GM12878 (cell line): ENCODE measurements at regions of chr17 and their contacts with region 1.

Region 1: DNA sequence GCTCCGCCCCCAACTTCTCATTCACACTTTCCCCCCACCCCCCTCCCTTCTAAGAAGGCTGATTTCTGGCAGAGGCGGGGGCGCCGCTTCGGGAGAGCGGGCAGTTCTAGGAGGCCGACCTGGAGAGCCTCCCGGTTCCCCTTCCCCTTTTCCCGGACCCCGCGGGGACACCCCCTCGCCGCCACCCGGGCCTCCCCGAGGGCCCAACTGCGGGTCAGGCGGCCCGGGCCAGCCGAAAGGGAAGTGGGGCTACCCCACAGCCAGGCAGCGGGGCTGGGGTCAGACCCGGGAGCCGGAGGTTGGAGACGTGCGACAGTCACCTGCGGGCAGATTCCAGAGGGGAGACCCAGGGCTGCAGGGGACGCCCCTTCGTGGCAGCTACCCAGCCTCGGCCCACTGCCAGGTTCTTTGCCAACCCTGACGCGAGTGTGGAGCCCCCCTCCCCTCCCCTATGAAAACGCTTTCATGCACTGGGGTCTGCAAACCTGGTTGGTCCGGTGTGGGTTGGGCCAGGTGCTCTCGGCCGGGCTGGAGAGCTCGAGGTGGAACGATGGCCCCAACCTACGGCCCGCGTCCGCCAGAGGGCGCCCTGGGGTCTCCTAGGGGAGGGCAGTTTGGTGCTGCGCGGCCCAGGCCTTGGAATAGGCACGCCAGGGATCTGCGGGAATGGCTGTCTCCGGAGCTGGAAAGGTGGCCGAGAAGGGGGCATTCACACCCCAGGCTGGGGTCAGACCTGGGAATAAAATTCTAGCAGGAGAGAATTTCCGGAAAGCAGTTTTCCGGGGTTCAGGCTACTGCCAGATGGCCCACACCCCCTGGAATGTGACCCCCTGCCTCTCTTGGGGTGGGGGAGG is 721 bp upstream of the SOCS3 start:
- DNase-seq: no peak
- ATAC-seq: peak; percentile 57
- H3K4me3 ChIP-seq: peak overlapping the region; percentile 80
- H3K27ac ChIP-seq: peak overlapping the region; percentile 31
- H3K4me1 ChIP-seq: peaks cover 32% of the 10 kb centered on the region
- H3K27me3 ChIP-seq: 0 out of 4 replicates have a peak, but pooled peaks cover 0 to 5% of the 10 kb centered on the region in 2 experiments
- CTCF ChIP-seq: peak; percentile 91 to 93 (median 91)
- EP300 ChIP-seq: no peak
- POLR2A ChIP-seq: no peak
- RAD21 ChIP-seq: peak; percentile 89

Region 2: GRCh38 chr17:78289802-78290363 is 70.7 kb before region 1 on chr17:
- CTCF ChIA-PET with region 1: interaction called, 11 read pairs
- POLR2A ChIA-PET with region 1: interaction called, 6 read pairs
- RAD21 ChIA-PET with region 1: interaction called, 12 read pairs
- SMC1A ChIA-PET with region 1: interaction called, 13 read pairs
- in situ Hi-C with region 1: no loop called
- intact Hi-C with region 1: loop called (anchors 2 kb)
- DNase-seq: peak; percentile 30
- ATAC-seq: peak; percentile 100
- H3K4me3 ChIP-seq: no peak overlapping the region
- H3K27ac ChIP-seq: no peak overlapping the region
- H3K4me1 ChIP-seq: peaks cover 8% of the 10 kb centered on the region
- H3K27me3 ChIP-seq: no peaks in the 10 kb centered on the region
- CTCF ChIP-seq: peak; percentile 88 to 92 (median 89)
- EP300 ChIP-seq: no peak
- POLR2A ChIP-seq: no peak
- RAD21 ChIP-seq: peak; percentile 91

Region 3: DNA sequence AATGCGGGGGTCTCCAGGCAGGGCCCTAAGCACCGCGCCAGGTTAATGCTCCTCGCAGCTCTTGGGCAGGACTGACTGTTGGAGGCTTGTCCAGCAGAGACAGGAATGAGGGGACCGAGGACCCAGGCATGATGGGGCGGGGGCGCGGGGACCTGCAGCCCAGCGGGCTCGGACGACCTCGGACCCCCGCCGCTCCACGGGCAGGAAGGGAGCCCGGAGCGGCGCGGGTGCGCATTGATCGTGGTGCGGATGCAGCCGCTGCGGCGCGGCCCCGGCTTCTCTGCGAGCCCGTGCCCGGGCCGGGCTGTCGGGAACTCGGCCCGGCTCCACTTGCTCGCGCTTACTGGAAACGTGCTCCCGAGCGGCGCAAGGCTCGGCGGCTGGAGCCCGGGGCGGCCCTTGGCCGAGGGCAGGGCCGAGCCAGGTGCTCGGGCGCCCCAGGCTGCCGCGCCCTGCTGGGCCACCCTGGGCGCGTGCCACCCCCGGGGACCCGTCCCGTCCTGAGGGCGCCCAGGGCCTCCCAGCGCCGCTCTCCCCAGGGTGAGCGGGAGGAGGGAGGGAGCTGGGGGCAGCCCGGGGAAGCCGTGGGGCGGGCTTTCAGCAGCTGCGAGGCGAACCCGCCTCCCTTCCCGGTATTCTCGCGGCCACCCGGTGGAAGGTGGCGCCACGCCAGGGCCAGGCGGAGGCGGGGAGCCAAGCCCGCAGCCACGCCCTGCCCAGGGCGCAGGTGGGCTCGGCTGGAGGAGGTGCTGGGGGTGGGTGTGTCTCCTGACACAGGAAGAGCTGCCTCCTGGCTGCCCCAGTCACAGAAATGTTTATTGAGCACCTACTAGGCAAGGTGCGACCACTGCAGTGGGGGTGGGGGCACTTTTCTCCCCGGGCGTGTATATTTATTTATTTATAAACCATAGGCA is 46.6 kb before region 1 on chr17:
- CTCF ChIA-PET with region 1: interaction called, 18 read pairs
- POLR2A ChIA-PET with region 1: interaction called, 8 read pairs
- RAD21 ChIA-PET with region 1: interaction called, 12 read pairs
- SMC1A ChIA-PET with region 1: interaction called, 6 read pairs
- in situ Hi-C with region 1: no loop called
- intact Hi-C with region 1: loop called (anchors 2 kb)
- DNase-seq: peak; percentile 45
- ATAC-seq: peak; percentile 69
- H3K4me3 ChIP-seq: peak overlapping the region; percentile 41; the same call in 1 of the 2 replicates
- H3K27ac ChIP-seq: no peak overlapping the region
- H3K4me1 ChIP-seq: peaks cover 42% of the 10 kb centered on the region
- H3K27me3 ChIP-seq: no peaks in the 10 kb centered on the region; a peak in 1 of 4 replicates
- CTCF ChIP-seq: no peak; a peak in 1 of 6 replicates
- EP300 ChIP-seq: no peak
- POLR2A ChIP-seq: no peak
- RAD21 ChIP-seq: no peak

Region 4: DNA sequence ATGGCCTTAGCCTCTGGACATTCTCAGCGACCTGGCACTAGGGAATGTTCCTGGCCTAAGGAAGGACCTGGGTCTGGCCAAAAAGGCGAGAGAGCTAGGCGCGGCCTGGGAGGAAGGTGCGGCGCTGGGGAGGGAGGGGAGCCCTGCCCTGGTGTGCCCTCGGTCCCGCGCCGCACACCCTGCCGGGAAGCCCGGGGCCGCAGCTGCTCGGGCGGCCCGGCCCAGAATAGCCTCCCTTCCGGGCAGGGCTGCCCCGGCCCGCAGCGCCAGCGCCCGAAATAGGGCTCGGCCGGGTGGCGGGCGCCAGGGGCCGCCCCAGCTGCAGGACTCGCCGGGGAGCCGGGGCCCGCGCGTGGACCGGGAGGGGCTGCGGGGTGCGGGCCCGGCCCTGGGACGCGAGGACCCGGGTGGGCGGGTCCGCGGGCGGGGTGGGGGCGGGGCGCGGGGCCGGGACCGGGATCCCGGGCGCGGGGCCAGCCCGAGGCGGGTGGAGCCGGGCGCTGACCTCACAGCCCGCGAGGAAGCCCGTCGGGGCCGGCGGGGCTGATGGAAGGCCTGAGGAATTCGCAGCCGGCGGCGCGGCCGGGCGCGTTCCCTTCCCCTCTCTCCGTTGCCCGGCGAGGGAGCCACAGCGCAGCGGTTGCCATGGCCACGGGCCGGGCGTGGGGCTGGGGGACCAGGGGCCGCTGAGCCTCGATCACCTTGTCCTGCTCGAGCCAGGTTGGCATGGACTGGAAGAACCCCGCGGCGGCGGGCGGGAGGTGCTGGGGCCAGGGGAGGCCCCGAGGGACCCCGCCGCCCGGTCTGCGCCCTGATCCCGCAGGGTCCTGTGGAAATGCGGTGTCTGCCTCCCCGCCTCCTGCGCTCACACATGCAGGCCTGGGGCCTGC is 18.8 kb before region 1 on chr17:
- CTCF ChIA-PET with region 1: interaction called, 14 read pairs
- POLR2A ChIA-PET with region 1: interaction called, 15 read pairs
- RAD21 ChIA-PET with region 1: interaction called, 9 read pairs
- SMC1A ChIA-PET with region 1: interaction called, 11 read pairs
- in situ Hi-C with region 1: no loop called
- intact Hi-C with region 1: loop called (anchors 2 kb)
- DNase-seq: no peak
- ATAC-seq: peak; percentile 2
- H3K4me3 ChIP-seq: no peak overlapping the region; the same call in 1 of the 2 replicates
- H3K27ac ChIP-seq: no peak overlapping the region
- H3K4me1 ChIP-seq: peaks cover 60% of the 10 kb centered on the region
- H3K27me3 ChIP-seq: no peaks in the 10 kb centered on the region
- CTCF ChIP-seq: no peak
- EP300 ChIP-seq: no peak
- POLR2A ChIP-seq: no peak
- RAD21 ChIP-seq: no peak

Region 5: DNA sequence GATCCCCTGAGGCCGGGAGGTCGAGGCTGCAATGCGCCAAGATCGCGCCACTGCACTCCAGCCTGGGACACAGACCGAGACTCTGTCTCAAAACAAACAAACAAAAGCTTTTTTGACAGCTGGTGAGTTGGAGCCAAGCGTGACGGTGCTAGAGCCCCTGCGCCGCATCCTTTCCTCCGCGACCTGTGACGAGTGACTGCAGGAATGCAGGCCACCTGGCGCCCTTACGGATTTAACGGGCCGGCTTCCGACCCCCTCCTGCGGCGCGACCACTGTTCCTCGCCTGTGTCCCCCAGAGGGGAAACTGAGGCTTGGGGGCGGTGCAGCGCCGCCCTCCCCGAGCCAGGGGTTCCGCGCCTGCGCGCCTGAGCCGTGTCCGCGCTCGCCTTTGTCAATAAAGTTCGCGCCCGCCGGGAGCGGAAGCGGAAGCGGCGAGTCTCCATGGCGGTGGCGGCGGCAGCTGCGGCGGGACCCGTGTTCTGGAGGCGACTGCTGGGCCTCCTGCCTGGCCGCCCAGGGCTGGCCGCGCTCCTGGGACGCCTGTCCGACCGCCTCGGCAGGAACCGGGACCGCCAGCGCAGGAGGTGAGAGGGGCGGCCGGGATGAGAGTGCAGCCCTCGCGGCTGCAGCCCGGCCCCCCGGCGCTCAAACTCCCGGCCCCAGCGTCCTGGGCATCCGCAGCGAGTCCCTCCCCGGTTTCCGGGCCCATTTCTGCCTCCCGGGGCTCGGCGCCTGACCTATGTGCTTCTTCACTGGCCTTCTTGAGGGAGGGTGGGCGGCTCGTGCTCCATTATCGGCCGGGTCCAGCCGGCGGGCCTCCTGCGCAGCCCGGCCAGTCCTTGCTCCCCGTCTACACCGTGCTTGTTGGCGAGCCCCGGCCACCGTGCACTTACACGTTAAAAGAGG is 17.9 kb after region 1 on chr17 and contains the start of gene PGS1:
- CTCF ChIA-PET with region 1: interaction called, 9 read pairs
- POLR2A ChIA-PET with region 1: interaction called, 16 read pairs
- RAD21 ChIA-PET with region 1: interaction called, 12 read pairs
- SMC1A ChIA-PET with region 1: interaction called, 3 read pairs
- in situ Hi-C with region 1: no loop called
- intact Hi-C with region 1: loop called (anchors 2 kb)
- DNase-seq: no peak
- ATAC-seq: peak; percentile 71
- H3K4me3 ChIP-seq: peak within 1 kb of the TSS; percentile 91
- H3K27ac ChIP-seq: peak within 1 kb of the TSS; percentile 76
- H3K4me1 ChIP-seq: peaks cover 42% of the 10 kb centered on the region
- H3K27me3 ChIP-seq: no peaks in the 10 kb centered on the region
- CTCF ChIP-seq: no peak
- EP300 ChIP-seq: 0 out of 4 replicates have a peak, but pooled peaks of 1 of the 2 experiments have one; percentile 17
- POLR2A ChIP-seq: peak; percentile 86
- RAD21 ChIP-seq: no peak
- polyA plus RNA-seq, gene PGS1: 1.3 to 1.9 TPM

Region 6: DNA sequence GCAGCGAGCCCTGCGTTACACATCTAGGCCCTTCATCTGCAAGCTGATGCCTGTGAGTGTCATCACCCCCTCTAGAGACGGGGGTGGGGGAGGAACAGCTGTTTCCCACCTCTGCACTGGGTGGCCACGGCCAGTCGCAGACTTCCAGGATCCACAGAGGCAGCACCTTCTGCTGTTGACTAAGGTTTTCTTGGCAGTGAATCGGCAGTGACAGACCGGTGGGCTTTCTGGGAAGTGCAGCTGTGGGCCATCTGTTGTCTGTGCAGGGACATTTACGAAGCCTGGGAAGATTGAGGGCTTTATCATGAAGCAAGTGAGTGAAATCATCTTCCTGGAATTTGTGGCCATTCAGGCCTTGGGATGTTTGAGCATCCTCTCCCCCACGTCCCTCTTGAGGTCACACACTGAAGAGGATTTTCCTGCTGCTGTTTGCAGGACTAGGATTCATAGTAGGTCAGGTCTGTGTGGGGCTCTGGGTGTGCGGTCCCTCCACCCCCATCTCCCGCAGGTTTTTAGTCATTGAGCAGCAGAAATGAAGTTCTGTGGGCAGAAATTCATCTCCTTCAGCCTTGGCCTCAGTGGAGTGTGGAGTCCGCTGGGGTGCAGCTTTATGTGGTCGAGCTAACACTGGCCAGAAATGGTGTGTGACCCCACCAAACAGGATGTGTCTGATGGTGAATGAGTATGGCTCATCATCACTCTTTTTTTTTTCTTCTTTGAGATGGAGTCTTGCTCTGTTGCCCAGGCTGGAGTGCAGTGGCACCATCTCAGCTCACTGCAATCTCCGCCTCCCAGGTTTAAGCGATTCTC is 29.8 kb after region 1 on chr17:
- CTCF ChIA-PET with region 1: interaction called, 14 read pairs
- POLR2A ChIA-PET with region 1: interaction called, 4 read pairs
- RAD21 ChIA-PET with region 1: interaction called, 9 read pairs
- SMC1A ChIA-PET with region 1: interaction called, 3 read pairs
- in situ Hi-C with region 1: no loop called
- intact Hi-C with region 1: no loop called
- DNase-seq: no peak
- ATAC-seq: no peak
- H3K4me3 ChIP-seq: no peak overlapping the region
- H3K27ac ChIP-seq: peak overlapping the region; percentile 32; the same call in 1 of the 2 replicates
- H3K4me1 ChIP-seq: peaks cover 64% of the 10 kb centered on the region
- H3K27me3 ChIP-seq: no peaks in the 10 kb centered on the region
- CTCF ChIP-seq: 0 out of 6 replicates have a peak, but pooled peaks of 2 of the 3 experiments have one; percentile 2 to 21
- EP300 ChIP-seq: no peak
- POLR2A ChIP-seq: no peak
- RAD21 ChIP-seq: no peak

Region 7: DNA sequence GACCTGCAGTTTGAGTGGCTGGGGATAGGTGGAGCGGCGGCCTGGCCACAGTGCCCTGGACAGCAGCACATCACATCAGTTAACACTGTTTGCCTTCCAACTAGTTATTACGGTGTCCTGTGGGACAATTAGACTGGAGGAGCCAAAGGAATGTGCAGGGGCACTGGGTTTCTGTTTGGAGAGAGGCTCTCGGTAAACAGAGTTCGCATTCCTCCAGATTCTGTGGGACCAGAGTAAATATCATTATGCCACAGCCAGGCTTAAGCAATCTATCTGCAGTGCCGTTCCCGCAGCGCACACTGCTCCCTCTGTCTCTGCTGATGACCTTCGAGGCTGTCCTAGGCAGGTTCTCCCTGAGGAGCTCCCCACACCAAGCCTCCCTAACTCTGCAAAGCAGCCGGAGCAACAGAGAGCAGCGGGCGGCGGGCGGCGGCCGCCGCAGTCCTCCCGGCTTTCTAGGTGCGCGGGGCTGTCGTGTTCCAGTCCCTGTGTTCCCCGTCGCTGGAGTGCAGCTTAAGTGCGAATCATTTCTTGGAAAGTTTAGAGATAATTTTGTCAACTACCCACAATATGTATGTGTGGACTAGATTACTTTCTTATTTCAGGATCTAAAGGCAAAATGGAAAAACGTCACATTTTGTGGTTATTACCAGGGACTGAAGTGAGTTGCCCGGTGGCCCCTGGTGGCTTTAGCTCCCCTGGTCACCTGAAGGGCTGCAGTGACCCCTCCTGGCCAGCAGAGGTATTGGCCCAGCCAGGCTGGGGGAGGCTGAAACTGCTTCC is 61.1 kb after region 1 on chr17:
- CTCF ChIA-PET with region 1: interaction called, 96 read pairs
- POLR2A ChIA-PET with region 1: interaction called, 7 read pairs
- RAD21 ChIA-PET with region 1: interaction called, 52 read pairs
- SMC1A ChIA-PET with region 1: interaction called, 26 read pairs
- in situ Hi-C with region 1: loop called (anchors 5 kb)
- intact Hi-C with region 1: loop called (anchors 1 kb)
- DNase-seq: peak; percentile 7
- ATAC-seq: peak; percentile 96
- H3K4me3 ChIP-seq: no peak overlapping the region
- H3K27ac ChIP-seq: no peak overlapping the region
- H3K4me1 ChIP-seq: no peaks in the 10 kb centered on the region; the same call in 1 of the 2 replicates
- H3K27me3 ChIP-seq: no peaks in the 10 kb centered on the region
- CTCF ChIP-seq: peak; percentile 95 to 99 (median 99); a peak in 5 of 6 replicates
- EP300 ChIP-seq: no peak
- POLR2A ChIP-seq: no peak
- RAD21 ChIP-seq: peak; percentile 92

Region 8: DNA sequence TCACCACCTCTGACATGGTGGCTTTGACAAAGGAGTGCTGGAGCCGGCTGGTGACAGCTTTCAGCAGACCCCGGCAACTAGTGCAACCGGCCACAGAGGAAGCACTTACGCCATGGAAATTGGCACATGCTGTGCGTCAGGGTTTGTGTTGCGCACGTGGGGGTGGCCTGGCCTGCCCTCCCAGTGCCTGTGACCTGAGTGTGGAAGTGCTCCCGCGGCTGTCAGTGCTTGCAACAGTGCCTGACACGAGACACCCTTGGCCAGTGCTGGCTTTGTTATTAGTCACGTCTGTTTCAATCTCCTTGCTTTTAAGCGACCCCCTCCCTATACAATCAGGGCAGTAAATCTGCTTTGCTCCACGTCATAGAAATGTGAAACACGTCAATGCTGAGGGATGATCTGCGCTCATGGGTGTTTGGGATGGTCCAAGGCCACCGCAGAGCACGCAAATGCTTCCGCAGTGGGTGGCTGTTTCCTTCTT is 82.1 kb after region 1 on chr17:
- CTCF ChIA-PET with region 1: no interaction called
- POLR2A ChIA-PET with region 1: no interaction called
- RAD21 ChIA-PET with region 1: no interaction called
- SMC1A ChIA-PET with region 1: no interaction called
- in situ Hi-C with region 1: no loop called
- intact Hi-C with region 1: no loop called
- DNase-seq: no peak
- ATAC-seq: no peak
- H3K4me3 ChIP-seq: no peak overlapping the region
- H3K27ac ChIP-seq: no peak overlapping the region
- H3K4me1 ChIP-seq: no peaks in the 10 kb centered on the region
- H3K27me3 ChIP-seq: no peaks in the 10 kb centered on the region
- CTCF ChIP-seq: no peak
- EP300 ChIP-seq: no peak
- POLR2A ChIP-seq: no peak
- RAD21 ChIP-seq: no peak